ENCODE measurements at regions of chrX and their contacts with region 1.

Region 1: GRCh38 chrX:74579597-74580198 is 34.7 kb downstream of the RLIM start:
- DNase-seq: no peak
- ATAC-seq: no peak
- H3K4me3 Mint-ChIP-seq: no peak overlapping the region
- H3K27ac Mint-ChIP-seq: peak overlapping the region; percentile 81
- H3K4me1 Mint-ChIP-seq: peaks cover 16% of the 10 kb centered on the region
- H3K27me3 Mint-ChIP-seq: no peaks in the 10 kb centered on the region

Region 2: DNA sequence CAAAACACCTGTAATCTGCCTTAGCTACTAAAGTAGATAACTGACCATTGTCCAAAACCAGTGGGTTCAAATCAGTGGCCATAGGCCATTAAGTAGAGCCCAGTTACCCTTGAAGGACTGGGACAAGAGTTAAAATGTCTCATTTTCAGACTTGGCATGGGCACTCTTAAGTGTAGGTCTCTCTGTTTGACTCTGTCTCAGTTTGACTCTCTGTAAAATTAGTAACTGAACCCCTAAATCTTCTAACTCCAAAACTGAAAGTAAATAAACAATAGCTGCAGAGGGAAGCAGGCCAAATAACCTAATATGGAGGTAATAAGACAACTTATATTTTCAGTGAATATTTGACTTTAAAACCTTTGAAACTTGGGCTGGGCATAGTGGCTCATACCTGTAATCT is 69.3 kb before region 1 on chrX:
- CTCF ChIA-PET with region 1: no interaction called
- POLR2A ChIA-PET with region 1: no interaction called
- intact Hi-C with region 1: loop called in 1 of 2 experiments (anchors 10 kb)
- DNase-seq: no peak
- ATAC-seq: no peak
- H3K4me3 Mint-ChIP-seq: no peak overlapping the region
- H3K27ac Mint-ChIP-seq: no peak overlapping the region
- H3K4me1 Mint-ChIP-seq: no peaks in the 10 kb centered on the region
- H3K27me3 Mint-ChIP-seq: peaks cover 1% of the 10 kb centered on the region

Measured in activated CD4-positive, alpha-beta T cell treated with anti-CD3 and anti-CD28 coated beads for 36 hours (primary cell).